T-cell (primary cell): ENCODE measurements at regions of chr4 and their contacts with region 1.

Region 1: GRCh38 chr4:42732776-42733175 is 75.9 kb upstream of the ATP8A1 start:
- DNase-seq: no peak
- ATAC-seq: no peak
- H3K4me3 ChIP-seq: no peak overlapping the region
- H3K4me3 Mint-ChIP-seq: no peak overlapping the region
- H3K27ac ChIP-seq: no peak overlapping the region
- H3K27ac Mint-ChIP-seq: no peak overlapping the region
- H3K4me1 ChIP-seq: no peaks in the 10 kb centered on the region
- H3K4me1 Mint-ChIP-seq: no peaks in the 10 kb centered on the region
- H3K27me3 ChIP-seq: no peaks in the 10 kb centered on the region
- H3K27me3 Mint-ChIP-seq: peaks cover 0 to 8% of the 10 kb centered on the region in 2 donors

Region 2: DNA sequence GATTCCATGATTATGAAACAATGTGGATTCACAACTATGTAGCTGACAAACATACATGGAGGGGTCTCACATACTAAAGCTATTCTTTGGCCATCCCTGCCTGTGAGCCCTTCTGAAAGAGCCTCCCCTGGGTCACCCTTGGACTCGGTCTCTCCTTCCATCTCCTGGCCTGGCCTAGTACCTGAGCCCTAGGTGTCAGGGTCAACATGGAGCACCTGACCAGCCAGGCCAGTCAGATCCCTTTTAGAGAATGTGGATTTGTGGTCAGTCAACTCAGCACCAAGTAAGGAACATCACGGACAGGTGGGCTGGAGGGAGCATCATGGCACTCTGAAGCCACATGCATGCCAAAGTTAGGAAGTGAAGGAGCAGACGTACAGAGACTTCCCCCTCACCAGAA is 92.2 kb before region 1 on chr4:
- CTCF ChIA-PET with region 1: no interaction called
- POLR2A ChIA-PET with region 1: interaction called in 1 of 2 experiments, 11 read pairs
- DNase-seq: no peak
- ATAC-seq: no peak
- H3K4me3 ChIP-seq: no peak overlapping the region
- H3K4me3 Mint-ChIP-seq: peak overlapping the region in 1 of 3 donors; percentile 30
- H3K27ac ChIP-seq: no peak overlapping the region
- H3K27ac Mint-ChIP-seq: peak overlapping the region in 1 of 2 donors; percentile 25
- H3K4me1 ChIP-seq: peaks cover 35 to 50% of the 10 kb centered on the region in 2 experiments
- H3K4me1 Mint-ChIP-seq: peaks cover 94 to 99% (median 97%) of the 10 kb centered on the region in 3 donors
- H3K27me3 ChIP-seq: no peaks in the 10 kb centered on the region
- H3K27me3 Mint-ChIP-seq: no peaks in the 10 kb centered on the region